ENCODE measurements at regions of chr5 and their contacts with region 1.

Region 1: DNA sequence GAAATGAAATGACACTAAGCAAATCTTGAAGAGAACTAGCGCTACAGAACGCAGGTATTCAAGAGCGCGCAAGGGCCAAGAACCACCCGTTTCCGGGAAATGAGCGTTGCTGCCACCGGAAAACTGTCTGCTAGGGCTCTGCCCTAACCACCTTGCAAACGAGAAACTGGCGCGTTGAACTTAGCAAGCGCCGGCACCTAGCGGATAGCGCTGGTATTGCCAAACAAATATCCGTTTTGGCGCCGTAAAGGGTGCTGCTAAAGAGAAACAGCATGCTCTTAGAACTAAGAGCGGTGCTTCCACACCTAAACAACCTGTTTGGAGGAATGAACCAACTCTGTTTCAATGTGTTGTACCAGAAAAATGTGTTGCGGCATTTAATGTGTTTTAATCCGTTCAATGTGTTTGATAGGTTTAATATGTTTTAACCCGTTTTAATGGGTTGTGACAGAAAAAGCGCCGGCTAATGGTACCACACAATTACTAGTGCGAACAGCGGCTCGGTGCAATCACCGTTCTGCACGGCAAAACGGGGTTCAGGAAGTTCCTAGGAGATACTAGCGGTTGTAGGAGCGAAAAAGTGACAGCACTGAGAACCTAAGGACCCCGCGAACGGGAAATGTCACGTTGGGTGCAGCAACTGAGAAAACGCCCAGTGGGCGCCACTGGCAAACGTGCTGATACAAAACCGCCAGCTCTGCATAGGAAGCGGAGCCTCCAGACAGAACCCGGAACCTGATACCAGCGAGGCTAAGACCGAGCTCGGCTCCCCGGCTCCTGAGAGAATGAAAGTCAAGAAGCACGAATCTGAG is at the start of gene ANXA2R:
- DNase-seq: peak; percentile 67 to 97
- ATAC-seq: peak; percentile 41 to 71
- H3K4me3 ChIP-seq: peak within 1 kb of the TSS; percentile 50
- H3K27ac ChIP-seq: peak within 1 kb of the TSS; percentile 85 to 93
- H3K4me1 ChIP-seq: peaks cover 6% of the 10 kb centered on the region; the same call in 2 of the 3 replicates
- CTCF ChIP-seq: peak; percentile 53
- EP300 ChIP-seq: no peak
- POLR2A ChIP-seq: no peak
- RAD21 ChIP-seq: peak; percentile 68 to 81
- polyA plus RNA-seq, gene ANXA2R: 1.7 and 1.8 TPM in 2 replicates

Region 2: DNA sequence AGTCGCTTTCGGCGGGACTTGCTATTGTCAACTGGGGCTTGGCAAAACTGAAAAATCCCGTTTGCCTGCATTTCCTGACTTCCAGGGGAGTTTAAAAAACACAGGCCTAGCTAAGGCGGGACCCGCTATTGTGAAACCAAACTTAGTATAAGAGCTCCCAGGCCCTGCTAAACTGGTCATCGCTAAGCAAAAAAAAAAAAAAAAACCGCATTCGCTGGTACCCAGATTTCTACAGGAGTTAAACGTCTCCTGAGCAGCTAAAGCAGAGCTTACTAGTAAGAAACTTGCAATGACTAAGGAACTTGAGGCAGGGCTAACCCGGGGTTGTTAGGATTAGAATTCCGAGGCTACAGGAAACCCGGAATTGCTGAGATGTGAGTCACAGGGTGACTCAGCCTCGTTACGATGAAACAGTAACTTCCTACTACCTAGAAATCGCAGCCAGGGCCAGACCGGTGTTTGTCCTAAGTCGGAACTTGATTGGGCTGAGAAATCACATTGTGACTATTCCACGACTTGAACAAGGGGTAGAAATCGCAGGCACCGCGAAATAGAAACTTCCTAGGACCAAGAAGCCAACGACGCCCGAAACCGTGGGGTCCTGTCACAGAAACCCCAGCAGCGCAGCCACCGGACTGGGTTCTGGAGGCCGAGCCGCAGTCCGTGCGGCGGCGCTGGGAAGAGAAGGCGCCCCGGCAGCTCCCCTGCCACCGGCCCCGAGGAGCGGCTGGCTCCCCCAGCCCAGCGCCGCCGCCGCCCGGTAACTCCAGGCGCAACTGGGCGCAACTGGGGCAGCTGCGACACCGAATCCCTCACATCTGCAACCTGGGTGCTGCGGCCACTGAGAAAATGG is 89.8 kb before region 1 on chr5:
- CTCF ChIA-PET with region 1: interaction called, 11 read pairs
- POLR2A ChIA-PET with region 1: interaction called, 5 read pairs
- DNase-seq: peak; percentile 97 to 99
- ATAC-seq: peak; percentile 93 to 94
- H3K4me3 ChIP-seq: peak overlapping the region; percentile 37
- H3K27ac ChIP-seq: peak overlapping the region; percentile 95 to 99
- H3K4me1 ChIP-seq: peaks cover 19% of the 10 kb centered on the region
- CTCF ChIP-seq: no peak
- EP300 ChIP-seq: peak; percentile 51 to 63; a peak in 2 of 5 replicates
- POLR2A ChIP-seq: no peak
- RAD21 ChIP-seq: 0 out of 5 replicates have a peak, but pooled peaks of 1 of the 2 experiments have one; percentile 27

Region 3: DNA sequence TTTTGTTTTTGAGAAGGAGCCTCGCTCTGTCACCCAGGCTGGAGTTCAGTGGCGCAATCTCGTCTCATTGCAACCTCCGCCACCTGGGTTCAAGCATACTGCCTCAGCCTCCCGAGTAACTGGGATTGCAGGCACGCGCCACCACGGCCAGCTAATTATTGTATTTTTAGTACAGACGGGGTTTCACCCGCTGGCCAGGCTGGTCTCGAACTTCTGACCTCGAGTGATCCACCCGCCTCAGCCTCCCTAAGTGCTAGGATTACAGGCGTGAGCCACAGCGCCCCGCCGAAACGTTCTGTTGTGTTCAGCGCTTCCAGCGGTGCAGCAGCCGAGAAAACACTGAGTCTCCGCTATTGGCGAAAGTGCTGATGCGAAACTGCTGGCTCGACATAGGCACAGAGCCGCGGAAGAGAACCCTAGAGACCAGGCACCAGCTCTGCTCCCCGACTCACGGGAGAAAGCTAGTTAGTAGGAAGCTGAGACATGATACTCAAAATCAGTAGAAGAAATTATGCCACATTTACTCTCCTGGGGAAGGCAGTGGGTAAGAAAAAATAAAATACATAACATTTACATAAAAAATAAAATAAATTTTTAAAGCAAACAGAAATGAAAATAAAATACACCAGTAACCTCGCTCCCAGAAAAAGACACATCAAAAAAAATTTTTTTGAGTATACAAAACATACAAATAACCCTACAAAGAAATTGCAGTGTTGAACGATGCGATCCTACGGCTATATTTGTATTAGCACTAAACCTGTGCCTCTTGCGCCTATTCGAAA is 31.9 kb before region 1 on chr5:
- CTCF ChIA-PET with region 1: interaction called, 15 read pairs
- POLR2A ChIA-PET with region 1: interaction called, 20 read pairs
- DNase-seq: peak; percentile 84 to 98
- ATAC-seq: peak; percentile 81 to 85
- H3K4me3 ChIP-seq: peak overlapping the region; percentile 56
- H3K27ac ChIP-seq: peak overlapping the region; percentile 93 to 95
- H3K4me1 ChIP-seq: peaks cover 13% of the 10 kb centered on the region
- CTCF ChIP-seq: peak; percentile 34
- EP300 ChIP-seq: no peak
- POLR2A ChIP-seq: peak; percentile 64
- RAD21 ChIP-seq: peak in 1 of 2 experiments; percentile 34; a peak in 3 of 5 replicates

Region 4: GRCh38 chr5:43027054-43027785 is 13.3 kb before region 1 on chr5:
- CTCF ChIA-PET with region 1: interaction called, 34 read pairs
- POLR2A ChIA-PET with region 1: no interaction called
- DNase-seq: no peak
- ATAC-seq: no peak
- H3K4me3 ChIP-seq: no peak overlapping the region
- H3K27ac ChIP-seq: no peak overlapping the region
- H3K4me1 ChIP-seq: no peaks in the 10 kb centered on the region
- CTCF ChIP-seq: no peak
- EP300 ChIP-seq: no peak
- POLR2A ChIP-seq: no peak
- RAD21 ChIP-seq: no peak

Region 5: DNA sequence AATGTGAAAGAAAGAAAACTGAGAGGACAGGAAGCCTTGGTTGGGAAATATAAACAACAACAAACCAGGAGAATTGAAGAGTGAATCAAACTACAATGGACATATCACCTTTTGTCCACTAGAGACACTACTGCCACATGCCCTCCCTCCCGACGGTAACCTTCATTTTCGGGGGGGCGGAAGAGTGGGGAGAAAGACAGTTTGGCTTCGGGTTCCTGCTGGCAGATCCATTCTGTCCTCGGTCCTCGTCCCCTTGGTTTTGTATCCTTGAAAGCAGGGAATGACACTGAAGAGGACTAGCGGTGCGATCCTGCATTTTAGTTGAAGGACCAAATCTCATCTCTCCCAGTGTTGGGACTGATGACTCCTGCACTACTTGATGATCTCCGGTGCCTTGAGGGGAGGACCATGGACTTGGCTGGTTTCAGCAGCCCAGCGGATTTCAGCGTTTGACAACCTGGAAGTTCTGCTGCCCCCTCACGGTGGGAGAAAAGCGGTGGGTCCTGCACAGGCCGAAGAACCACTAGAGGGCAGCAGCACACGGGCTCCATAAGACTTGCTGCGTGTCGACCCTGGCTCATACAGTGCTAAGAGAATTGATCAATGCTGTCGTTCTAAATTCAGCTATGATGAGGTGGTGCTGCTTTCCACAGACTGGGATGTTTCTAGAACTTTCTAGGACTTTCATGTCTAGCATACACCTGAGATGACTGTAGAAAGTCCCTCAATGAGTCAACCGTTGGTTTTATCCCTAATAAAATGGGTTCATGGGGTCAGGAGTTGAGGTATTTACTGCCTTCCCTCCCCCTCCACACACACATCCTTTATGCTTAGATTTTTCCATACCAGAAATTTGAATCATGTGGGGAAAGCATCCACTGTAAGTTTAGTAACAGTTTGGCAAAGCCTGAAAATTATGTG is 65.1 kb after region 1 on chr5:
- CTCF ChIA-PET with region 1: interaction called, 17 read pairs
- POLR2A ChIA-PET with region 1: no interaction called
- DNase-seq: peak; percentile 80 to 98
- ATAC-seq: peak; percentile 96 to 98
- H3K4me3 ChIP-seq: peak overlapping the region; percentile 50
- H3K27ac ChIP-seq: peak overlapping the region; percentile 75 to 82
- H3K4me1 ChIP-seq: 0 out of 3 replicates have a peak, but pooled peaks cover 3% of the 10 kb centered on the region
- CTCF ChIP-seq: peak; percentile 100
- EP300 ChIP-seq: no peak
- POLR2A ChIP-seq: no peak
- RAD21 ChIP-seq: peak; percentile 83 to 84

Measured in A549 (cell line).